ENCODE measurements at regions of chr12 and their contacts with region 1.

Region 1: DNA sequence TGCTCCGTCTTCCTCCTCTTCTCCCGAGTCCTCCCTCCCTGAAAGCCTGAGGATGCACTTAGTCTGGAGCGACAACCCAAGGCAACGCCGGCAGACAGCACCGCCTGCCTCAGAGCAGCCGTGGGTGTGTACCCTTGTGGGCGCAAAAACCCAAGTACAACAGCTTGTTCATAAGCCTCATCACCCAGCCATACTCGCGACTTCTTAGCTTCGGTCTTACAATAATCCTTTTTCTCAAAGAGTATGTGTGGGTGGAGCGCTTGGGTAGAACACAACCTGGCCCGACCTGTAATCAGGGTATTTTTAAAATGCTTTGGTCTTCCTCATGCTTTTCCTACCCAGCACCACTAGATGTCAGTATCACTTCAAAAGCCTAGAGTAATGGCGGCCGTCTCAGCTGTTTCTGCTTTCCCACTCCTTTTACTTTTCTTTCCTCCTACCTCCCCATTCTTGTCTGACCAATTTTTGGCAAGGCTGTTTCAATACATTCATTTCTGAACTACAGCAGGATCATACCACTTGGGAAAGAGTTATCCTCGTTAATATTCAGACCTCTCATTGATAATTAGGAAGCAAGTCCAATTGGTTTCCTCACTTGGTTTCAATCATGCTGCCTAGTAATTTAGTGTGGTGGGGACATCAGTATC is 198.9 kb downstream of the EPS8 start:
- DNase-seq: peak; percentile 58
- H3K4me3 Mint-ChIP-seq: peak overlapping the region; percentile 16
- H3K27ac Mint-ChIP-seq: no peak overlapping the region
- H3K4me1 Mint-ChIP-seq: peaks cover 12% of the 10 kb centered on the region
- H3K27me3 Mint-ChIP-seq: no peaks in the 10 kb centered on the region

Region 2: GRCh38 chr12:15146585-15146984 is 443.7 kb before region 1 on chr12:
- CTCF ChIA-PET with region 1: no interaction called
- DNase-seq: no peak
- H3K4me3 Mint-ChIP-seq: no peak overlapping the region
- H3K27ac Mint-ChIP-seq: no peak overlapping the region
- H3K4me1 Mint-ChIP-seq: no peaks in the 10 kb centered on the region
- H3K27me3 Mint-ChIP-seq: peaks cover 4% of the 10 kb centered on the region

Region 3: DNA sequence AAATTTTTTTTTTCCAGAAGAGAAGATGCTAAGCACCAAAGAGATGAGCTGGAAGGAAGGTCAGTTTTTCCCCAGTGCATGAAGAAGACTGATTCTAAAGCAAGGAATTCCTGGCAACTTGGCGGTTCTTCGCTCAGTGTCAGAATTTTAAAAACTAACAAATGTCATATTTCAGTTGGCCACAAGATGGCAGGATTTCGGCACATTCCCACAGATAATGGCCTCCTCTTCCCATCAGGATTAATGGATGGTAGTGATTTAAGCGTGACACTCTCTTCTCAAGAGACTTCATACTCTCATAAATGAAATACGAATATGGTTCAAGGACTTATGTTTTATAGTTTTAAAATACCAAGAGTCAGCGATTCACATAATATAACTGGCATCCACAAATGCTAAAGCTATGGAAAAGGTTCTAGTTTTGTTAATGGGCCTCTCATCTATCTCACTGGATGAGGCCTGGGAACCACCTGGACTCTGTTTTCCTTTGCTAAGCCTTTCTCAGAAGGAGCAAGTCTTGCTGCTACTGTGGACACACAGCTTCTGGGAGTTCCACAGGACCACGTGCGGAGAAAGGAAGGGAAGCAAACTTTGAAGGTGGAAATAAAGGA is 314.1 kb before region 1 on chr12:
- CTCF ChIA-PET with region 1: interaction called, 36 read pairs
- DNase-seq: no peak
- H3K4me3 Mint-ChIP-seq: no peak overlapping the region
- H3K27ac Mint-ChIP-seq: no peak overlapping the region
- H3K4me1 Mint-ChIP-seq: peaks cover 9% of the 10 kb centered on the region
- H3K27me3 Mint-ChIP-seq: no peaks in the 10 kb centered on the region

Region 4: DNA sequence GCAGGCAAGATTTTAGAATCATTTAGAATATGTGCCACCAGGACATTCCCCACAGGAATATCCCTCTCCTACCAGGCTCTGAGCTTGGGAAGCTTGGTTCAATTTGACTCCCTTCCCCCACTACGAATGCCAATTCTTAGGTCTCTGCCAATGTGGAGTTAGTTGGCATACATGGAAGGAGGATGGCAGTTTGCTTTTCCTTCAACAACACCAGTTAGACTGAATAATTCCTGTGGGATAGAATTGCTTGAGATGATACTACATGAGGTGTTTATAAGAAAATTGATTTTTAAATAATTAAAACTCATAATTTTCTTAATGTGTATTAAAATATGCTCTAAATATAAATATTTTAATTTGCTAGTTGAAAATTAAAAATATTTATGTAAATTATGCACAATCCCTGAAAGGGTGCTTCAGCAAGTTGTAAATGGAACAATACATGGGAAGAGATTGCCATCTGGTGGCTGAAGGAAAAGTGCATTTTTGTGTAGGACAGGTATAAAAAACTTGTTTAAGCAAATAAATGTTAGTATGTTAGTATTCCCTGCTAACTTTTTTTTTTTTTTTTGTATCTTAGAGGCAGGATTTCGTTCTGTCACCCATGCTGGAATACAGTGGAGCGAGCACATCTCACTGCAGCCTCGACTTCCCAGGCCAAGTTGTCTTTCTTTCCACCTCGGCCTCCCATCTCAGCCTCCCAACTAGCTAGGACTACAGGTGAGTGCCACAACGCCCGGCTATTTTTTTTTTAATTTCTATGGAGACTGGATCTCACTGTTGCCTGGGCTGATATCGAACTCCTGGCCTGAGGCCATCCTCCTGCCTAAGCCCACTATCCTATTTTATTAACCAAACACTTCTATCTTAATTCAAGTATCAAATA is 266.0 kb after region 1 on chr12:
- CTCF ChIA-PET with region 1: interaction called, 81 read pairs
- DNase-seq: peak; percentile 60
- H3K4me3 Mint-ChIP-seq: no peak overlapping the region
- H3K27ac Mint-ChIP-seq: no peak overlapping the region
- H3K4me1 Mint-ChIP-seq: no peaks in the 10 kb centered on the region
- H3K27me3 Mint-ChIP-seq: peaks cover 15% of the 10 kb centered on the region

Measured in activated naive CD4-positive, alpha-beta T cell treated with anti-CD3 and anti-CD28 coated beads, Interleukin-2, amount 10 ng/mL, durations not matched to agents 7 days and 5 days (primary cell).